Heart right ventricle (tissue), 16 donors: ENCODE measurements at regions of chr10 and their contacts with region 1.

Region 1: DNA sequence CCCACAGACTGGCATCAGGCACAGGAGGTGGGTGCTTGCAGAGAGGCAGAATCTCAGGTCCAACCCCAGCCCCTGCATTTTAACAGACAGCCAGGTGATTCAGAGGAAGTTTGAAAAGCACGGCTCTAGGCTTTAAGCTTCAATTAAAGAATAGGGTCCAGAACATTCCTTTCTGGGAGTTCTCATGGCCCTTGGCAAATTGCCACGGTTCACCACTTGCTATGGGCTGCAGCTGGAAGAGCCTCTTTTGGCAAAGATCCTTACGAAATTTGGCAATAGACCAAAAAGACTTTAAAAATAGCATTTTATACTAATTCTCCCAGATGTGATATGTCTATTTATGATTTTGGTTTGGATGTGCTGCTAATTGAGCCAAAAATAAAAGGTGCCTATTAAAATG is 148.1 kb downstream of the ITGA8 start:
- DNase-seq: peak; percentile 19 to 47
- ATAC-seq: peak in 5 of 8 donors; percentile 25 to 77 (median 58)
- H3K4me3 ChIP-seq: no peak overlapping the region
- H3K27ac ChIP-seq: no peak overlapping the region
- H3K4me1 ChIP-seq: peaks cover 0 to 19% (median 9%) of the 10 kb centered on the region in 9 donors
- H3K27me3 ChIP-seq: no peaks in the 10 kb centered on the region
- CTCF ChIP-seq: no peak

Region 2: GRCh38 chr10:15433850-15434537 is 137.6 kb before region 1 on chr10:
- intact Hi-C with region 1: loop called in 1 of 10 experiments (anchors 10 kb)
- DNase-seq: peak in 1 of 2 donors; percentile 57
- ATAC-seq: peak in 7 of 8 donors; percentile 38 to 87 (median 70)
- H3K4me3 ChIP-seq: peak overlapping the region in 7 of 10 donors; percentile 24 to 49 (median 41)
- H3K27ac ChIP-seq: no peak overlapping the region
- H3K4me1 ChIP-seq: peaks cover 0 to 7% (median 2%) of the 10 kb centered on the region in 9 donors
- H3K27me3 ChIP-seq: peaks cover 0 to 5% (median 0%) of the 10 kb centered on the region in 7 donors
- CTCF ChIP-seq: peak; percentile 69 to 86 (median 79)